H1 (cell line): ENCODE measurements at regions of chr16 and their contacts with region 1.

Region 1: GRCh38 chr16:77171745-77172635 is 19.0 kb upstream of the MON1B start:
- DNase-seq: no peak
- H3K4me3 ChIP-seq: no peak overlapping the region
- H3K27ac ChIP-seq: no peak overlapping the region
- H3K4me1 ChIP-seq: no peaks in the 10 kb centered on the region
- H3K27me3 ChIP-seq: no peaks in the 10 kb centered on the region
- CTCF ChIP-seq: peak in 2 of 3 experiments; percentile 68 to 69; a peak in 3 of 4 replicates
- EP300 ChIP-seq: no peak
- POLR2A ChIP-seq: no peak
- RAD21 ChIP-seq: peak; percentile 85 to 90

Region 2: GRCh38 chr16:76653390-76654026 is 518.5 kb before region 1 on chr16:
- CTCF ChIA-PET with region 1: interaction called, 20 read pairs
- POLR2A ChIA-PET with region 1: no interaction called
- DNase-seq: no peak
- H3K4me3 ChIP-seq: no peak overlapping the region
- H3K27ac ChIP-seq: no peak overlapping the region
- H3K4me1 ChIP-seq: no peaks in the 10 kb centered on the region
- H3K27me3 ChIP-seq: no peaks in the 10 kb centered on the region
- CTCF ChIP-seq: peak in 2 of 3 experiments; percentile 71 to 83; a peak in 3 of 4 replicates
- EP300 ChIP-seq: no peak
- POLR2A ChIP-seq: no peak
- RAD21 ChIP-seq: peak; percentile 93

Region 3: GRCh38 chr16:76676356-76676755 is 495.6 kb before region 1 on chr16:
- CTCF ChIA-PET with region 1: interaction called, 46 read pairs
- POLR2A ChIA-PET with region 1: no interaction called
- DNase-seq: no peak
- H3K4me3 ChIP-seq: no peak overlapping the region
- H3K27ac ChIP-seq: no peak overlapping the region
- H3K4me1 ChIP-seq: peaks cover 0 to 5% (median 3%) of the 10 kb centered on the region in 4 experiments; a peak in 3 of 7 replicates
- H3K27me3 ChIP-seq: no peaks in the 10 kb centered on the region
- CTCF ChIP-seq: no peak
- EP300 ChIP-seq: no peak
- POLR2A ChIP-seq: no peak
- RAD21 ChIP-seq: no peak

Region 4: DNA sequence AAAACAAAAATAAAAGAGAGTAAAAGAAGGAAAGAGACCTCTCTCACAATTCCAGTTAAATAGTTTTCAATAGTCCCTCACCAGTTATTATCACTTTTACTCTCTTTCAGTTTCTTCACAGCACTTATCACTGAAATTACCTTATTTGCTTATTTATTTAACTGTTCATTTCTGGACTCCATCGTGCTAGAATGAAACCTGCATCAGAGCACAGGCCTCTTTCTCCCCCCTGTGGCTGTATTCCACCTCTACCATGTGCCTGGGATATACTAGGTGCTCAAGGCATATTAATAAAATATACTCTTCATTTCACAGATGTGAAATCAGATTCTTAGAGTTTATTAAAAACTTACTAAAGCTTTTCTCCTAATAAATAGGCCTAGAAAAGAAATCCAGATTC is 289.9 kb before region 1 on chr16:
- CTCF ChIA-PET with region 1: interaction called, 11 read pairs
- POLR2A ChIA-PET with region 1: no interaction called
- DNase-seq: no peak
- H3K4me3 ChIP-seq: no peak overlapping the region
- H3K27ac ChIP-seq: no peak overlapping the region
- H3K4me1 ChIP-seq: peaks cover 0 to 4% (median 3%) of the 10 kb centered on the region in 4 experiments; a peak in 3 of 7 replicates
- H3K27me3 ChIP-seq: no peaks in the 10 kb centered on the region
- CTCF ChIP-seq: no peak
- EP300 ChIP-seq: no peak
- POLR2A ChIP-seq: no peak
- RAD21 ChIP-seq: no peak; a peak in 1 of 4 replicates

Region 5: GRCh38 chr16:77043076-77043475 is 128.9 kb before region 1 on chr16:
- CTCF ChIA-PET with region 1: interaction called, 42 read pairs
- POLR2A ChIA-PET with region 1: no interaction called
- DNase-seq: no peak
- H3K4me3 ChIP-seq: no peak overlapping the region
- H3K27ac ChIP-seq: no peak overlapping the region
- H3K4me1 ChIP-seq: no peaks in the 10 kb centered on the region
- H3K27me3 ChIP-seq: no peaks in the 10 kb centered on the region
- CTCF ChIP-seq: peak in 2 of 3 experiments; percentile 26 to 61; a peak in 2 of 4 replicates
- EP300 ChIP-seq: no peak
- POLR2A ChIP-seq: no peak
- RAD21 ChIP-seq: peak; percentile 78 to 79

Region 6: DNA sequence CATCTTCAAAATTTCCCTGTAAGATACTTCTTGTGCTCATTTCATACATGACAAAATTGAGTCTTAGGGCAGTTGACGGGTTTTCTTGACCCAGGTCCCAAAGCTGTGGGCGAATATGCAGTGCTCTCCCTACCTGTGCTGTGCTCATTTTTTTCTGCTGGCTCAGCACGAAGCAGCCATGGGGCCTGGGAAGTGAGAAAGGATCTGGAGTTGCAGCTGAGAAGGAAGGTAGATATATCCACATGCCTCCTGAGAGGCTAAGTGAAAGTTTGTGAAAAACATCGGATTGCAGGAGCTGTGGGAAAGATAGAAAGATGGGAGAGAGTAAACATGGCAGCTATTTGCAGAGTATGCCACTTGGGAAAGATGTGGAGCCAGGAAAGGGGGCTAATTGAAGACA is 23.9 kb before region 1 on chr16:
- CTCF ChIA-PET with region 1: interaction called, 12 read pairs
- POLR2A ChIA-PET with region 1: no interaction called
- DNase-seq: no peak
- H3K4me3 ChIP-seq: no peak overlapping the region
- H3K27ac ChIP-seq: no peak overlapping the region
- H3K4me1 ChIP-seq: no peaks in the 10 kb centered on the region
- H3K27me3 ChIP-seq: no peaks in the 10 kb centered on the region
- CTCF ChIP-seq: no peak
- EP300 ChIP-seq: no peak
- POLR2A ChIP-seq: no peak
- RAD21 ChIP-seq: no peak

Region 7: DNA sequence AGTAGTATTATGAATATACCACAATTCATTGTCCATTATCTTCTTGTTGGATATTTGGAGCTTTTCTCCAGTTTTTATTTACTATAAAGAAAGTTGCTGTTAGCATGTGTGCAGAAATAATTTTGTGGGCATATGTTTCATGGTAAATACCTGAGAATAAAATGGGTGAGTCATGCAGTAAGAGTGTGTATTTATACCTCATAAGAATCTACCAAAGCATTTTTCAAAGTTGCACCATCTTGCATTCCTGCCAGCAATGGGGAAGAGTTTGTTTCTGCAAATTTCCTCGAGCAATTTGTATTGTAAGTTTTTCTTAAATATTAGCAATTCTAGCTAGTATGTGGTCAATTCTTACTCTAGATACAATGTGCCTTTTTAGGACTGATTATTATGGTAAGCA is 11.1 kb after region 1 on chr16:
- CTCF ChIA-PET with region 1: interaction called, 37 read pairs
- POLR2A ChIA-PET with region 1: no interaction called
- DNase-seq: no peak
- H3K4me3 ChIP-seq: no peak overlapping the region
- H3K27ac ChIP-seq: no peak overlapping the region
- H3K4me1 ChIP-seq: no peaks in the 10 kb centered on the region
- H3K27me3 ChIP-seq: no peaks in the 10 kb centered on the region
- CTCF ChIP-seq: no peak
- EP300 ChIP-seq: no peak
- POLR2A ChIP-seq: no peak
- RAD21 ChIP-seq: no peak